Activated CD4-positive, alpha-beta T cell treated with anti-CD3 and anti-CD28 coated beads for 36 hours (primary cell): ENCODE measurements at regions of chr6 and their contacts with region 1.

Region 1: GRCh38 chr6:26473758-26474438 is 16.1 kb downstream of the BTN2A1 start:
- DNase-seq: peak; percentile 86
- ATAC-seq: peak; percentile 94
- H3K4me3 Mint-ChIP-seq: peak overlapping the region; percentile 100
- H3K27ac Mint-ChIP-seq: peak overlapping the region; percentile 100
- H3K4me1 Mint-ChIP-seq: peaks cover 38% of the 10 kb centered on the region
- H3K27me3 Mint-ChIP-seq: no peaks in the 10 kb centered on the region

Region 2: DNA sequence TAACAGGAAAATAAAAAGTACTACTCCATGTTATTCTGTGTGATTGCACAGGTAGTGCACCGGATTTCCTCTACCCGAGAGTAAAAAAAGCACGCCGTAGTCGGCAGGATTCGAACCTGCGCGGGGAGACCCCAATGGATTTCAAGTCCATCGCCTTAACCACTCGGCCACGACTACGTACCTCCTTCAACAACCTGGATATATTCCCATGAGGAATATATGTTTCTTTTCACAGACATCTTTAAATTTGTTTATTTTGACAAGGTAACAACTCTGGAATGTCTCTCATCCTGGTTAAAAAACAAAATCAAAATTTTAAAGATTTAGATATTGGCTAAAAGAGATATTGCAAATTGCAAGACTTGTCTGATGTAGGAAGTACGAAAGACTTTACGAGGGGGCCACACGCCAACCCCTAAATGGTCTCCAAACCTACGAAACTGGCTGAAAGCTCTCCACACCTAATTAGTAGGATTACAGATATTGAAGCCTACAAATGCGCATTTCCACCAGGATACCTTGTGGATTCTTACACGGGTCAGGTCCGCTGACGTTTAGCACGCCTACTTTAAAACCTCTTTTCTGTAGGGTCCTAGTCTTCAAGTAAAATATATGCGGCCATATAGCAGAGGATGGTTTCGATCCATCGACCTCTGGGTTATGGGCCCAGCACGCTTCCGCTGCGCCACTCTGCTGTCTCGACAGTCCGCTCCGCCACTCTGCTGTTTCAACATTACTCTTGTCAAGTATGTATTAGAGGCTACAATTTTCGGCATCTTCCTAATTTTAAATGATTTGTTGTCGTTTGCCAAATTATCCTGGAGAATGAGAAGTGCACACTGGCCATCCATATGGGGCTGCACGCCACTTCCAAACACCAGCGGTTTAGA is 161.2 kb before region 1 on chr6:
- CTCF ChIA-PET with region 1: no interaction called
- POLR2A ChIA-PET with region 1: no interaction called
- intact Hi-C with region 1: no loop called
- DNase-seq: peak; percentile 89
- ATAC-seq: peak; percentile 69
- H3K4me3 Mint-ChIP-seq: peak overlapping the region; percentile 88
- H3K27ac Mint-ChIP-seq: peak overlapping the region; percentile 90
- H3K4me1 Mint-ChIP-seq: peaks cover 37% of the 10 kb centered on the region
- H3K27me3 Mint-ChIP-seq: peaks cover 3% of the 10 kb centered on the region

Region 3: DNA sequence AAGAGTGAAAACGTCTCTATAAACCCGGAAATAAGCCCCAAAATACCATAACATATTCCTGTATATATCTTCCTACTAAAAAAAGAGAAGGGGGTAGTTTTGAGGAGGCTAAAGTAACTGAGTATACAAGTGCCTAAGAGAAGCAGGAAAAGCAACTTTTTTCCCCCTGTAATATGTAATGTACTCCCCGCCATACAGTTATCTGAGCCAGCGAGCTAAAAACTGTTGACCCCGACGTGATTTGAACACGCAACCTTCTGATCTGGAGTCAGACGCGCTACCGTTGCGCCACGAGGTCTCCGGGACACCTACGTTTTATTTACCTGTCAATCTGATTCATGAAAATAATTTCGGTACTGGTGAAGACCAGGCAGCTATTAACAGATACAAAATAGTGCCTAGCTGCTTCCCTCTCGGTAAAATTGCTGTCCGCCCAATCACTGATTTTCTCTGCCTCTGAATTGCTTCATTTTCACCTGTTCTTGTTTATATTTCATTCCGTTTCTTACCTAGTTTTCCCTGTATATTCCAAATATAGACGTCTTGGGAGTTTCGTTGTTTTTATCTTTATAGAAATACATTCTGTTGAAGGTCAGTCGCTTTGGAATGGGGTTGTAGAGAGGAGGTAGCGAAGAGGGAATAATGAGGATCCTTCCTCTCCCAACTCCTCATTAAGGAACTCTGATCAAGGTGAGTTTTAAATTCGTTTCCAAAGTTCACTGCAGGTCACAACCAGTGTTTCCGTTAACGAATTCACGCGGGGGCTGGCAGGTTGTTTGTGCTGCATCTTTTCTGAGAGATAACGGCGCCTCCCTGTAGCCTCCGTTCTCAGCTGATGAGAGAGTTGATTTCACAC is 142.5 kb before region 1 on chr6:
- CTCF ChIA-PET with region 1: no interaction called
- POLR2A ChIA-PET with region 1: no interaction called
- intact Hi-C with region 1: no loop called
- DNase-seq: peak; percentile 78
- ATAC-seq: peak; percentile 53
- H3K4me3 Mint-ChIP-seq: peak overlapping the region; percentile 88
- H3K27ac Mint-ChIP-seq: peak overlapping the region; percentile 70
- H3K4me1 Mint-ChIP-seq: peaks cover 47% of the 10 kb centered on the region
- H3K27me3 Mint-ChIP-seq: peaks cover 10% of the 10 kb centered on the region

Region 4: GRCh38 chr6:26342106-26343004 is 131.5 kb before region 1 on chr6:
- CTCF ChIA-PET with region 1: interaction called, 3 read pairs
- POLR2A ChIA-PET with region 1: interaction called, 3 read pairs
- intact Hi-C with region 1: loop called in 1 of 2 experiments (anchors 5 kb)
- DNase-seq: peak; percentile 63
- ATAC-seq: peak; percentile 60
- H3K4me3 Mint-ChIP-seq: peak overlapping the region; percentile 73
- H3K27ac Mint-ChIP-seq: peak overlapping the region; percentile 81
- H3K4me1 Mint-ChIP-seq: peaks cover 12% of the 10 kb centered on the region
- H3K27me3 Mint-ChIP-seq: no peaks in the 10 kb centered on the region

Region 5: DNA sequence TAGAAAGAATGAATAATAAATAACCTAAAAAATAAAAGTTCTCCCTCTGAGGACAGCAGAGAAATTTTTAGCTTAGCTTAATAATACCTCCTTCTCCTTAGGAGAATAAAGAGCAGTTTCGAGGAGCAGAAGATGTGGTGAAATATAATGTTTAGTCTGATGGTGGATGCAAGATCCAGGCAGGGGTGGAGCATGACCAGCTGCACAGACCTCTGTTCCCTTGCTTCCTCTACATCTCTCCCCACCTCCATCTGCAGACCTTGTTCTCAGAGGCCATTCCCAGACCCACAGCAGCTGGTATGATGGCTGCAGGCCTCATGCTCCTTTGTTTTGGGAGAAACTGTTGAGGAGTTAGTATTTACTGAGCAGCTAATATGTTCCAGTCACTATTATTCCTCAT is 107.4 kb before region 1 on chr6:
- CTCF ChIA-PET with region 1: interaction called, 3 read pairs
- POLR2A ChIA-PET with region 1: interaction called, 5 read pairs
- intact Hi-C with region 1: loop called (anchors 1 to 5 kb)
- DNase-seq: no peak
- ATAC-seq: no peak
- H3K4me3 Mint-ChIP-seq: no peak overlapping the region
- H3K27ac Mint-ChIP-seq: peak overlapping the region; percentile 61
- H3K4me1 Mint-ChIP-seq: peaks cover 58% of the 10 kb centered on the region
- H3K27me3 Mint-ChIP-seq: no peaks in the 10 kb centered on the region

Region 6: DNA sequence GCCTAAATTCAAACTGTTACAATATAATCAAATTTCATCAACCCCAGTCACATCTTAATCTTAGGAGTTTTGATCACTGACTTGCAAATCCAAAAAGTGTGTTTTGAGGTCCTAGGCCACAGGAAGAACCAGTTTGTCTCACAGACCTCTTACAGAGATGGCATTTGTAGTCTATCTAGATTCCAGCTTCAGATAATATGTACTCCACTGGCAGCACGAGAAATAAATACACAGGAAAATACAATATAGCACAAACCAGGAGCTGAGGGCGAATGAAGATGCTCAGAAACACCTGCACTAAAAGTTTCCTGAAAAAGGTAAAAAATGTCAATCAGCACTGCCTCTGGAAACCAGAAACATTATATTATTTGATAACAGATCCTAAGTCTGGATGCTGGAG is 34.2 kb before region 1 on chr6:
- CTCF ChIA-PET with region 1: interaction called, 3 read pairs
- POLR2A ChIA-PET with region 1: no interaction called
- intact Hi-C with region 1: loop called in 1 of 2 experiments (anchors 1 kb)
- DNase-seq: no peak
- ATAC-seq: no peak
- H3K4me3 Mint-ChIP-seq: peak overlapping the region; percentile 96
- H3K27ac Mint-ChIP-seq: peak overlapping the region; percentile 98
- H3K4me1 Mint-ChIP-seq: peaks cover 40% of the 10 kb centered on the region
- H3K27me3 Mint-ChIP-seq: no peaks in the 10 kb centered on the region

Region 7: DNA sequence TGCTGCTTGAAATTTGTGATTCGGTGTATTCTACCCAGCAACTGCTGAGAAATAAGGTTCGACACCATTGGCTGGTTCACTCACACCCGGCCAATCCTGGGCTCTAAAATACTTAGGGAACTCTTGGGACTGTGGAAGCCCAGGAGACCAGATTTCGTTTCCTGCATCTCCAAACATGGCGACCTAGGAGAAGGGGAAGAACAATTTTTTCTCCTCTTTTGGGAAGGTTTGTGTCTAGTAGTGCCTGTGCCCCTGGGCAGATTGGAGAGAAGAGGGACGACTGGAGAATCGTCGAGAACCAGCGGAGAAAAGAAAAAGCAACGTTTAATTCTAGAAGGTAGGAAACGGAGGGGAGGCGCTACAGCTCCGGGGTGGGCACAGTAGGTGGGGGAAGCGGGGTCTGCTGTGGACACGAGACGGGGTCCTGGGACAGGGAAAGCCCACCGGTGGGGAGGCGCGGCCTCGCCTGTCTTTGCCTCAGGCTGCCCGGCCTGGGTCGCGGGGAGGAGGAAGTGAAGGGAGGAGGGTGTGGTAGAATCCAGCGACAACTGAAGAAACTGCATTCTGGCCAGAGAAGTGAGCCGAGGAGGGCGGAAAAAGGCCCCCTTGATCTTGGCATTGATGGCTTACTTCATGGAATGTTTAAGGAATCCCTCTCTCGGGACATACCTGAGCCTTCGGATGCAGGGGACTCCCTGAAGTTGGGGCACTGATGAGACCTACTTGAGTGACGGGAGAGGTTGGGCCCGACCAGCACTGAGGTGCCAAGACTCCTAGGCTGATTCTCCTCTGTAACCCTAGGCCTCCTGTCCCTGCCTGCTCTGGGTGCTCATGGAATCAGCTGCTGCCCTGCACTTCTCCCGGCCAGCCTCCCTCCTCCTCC is 15.9 kb before region 1 on chr6 and contains the start of gene BTN2A1:
- CTCF ChIA-PET with region 1: no interaction called
- POLR2A ChIA-PET with region 1: interaction called, 3 read pairs
- intact Hi-C with region 1: loop called (anchors 1 kb)
- DNase-seq: peak; percentile 76
- ATAC-seq: peak; percentile 99
- H3K4me3 Mint-ChIP-seq: peak within 1 kb of the TSS; percentile 87
- H3K27ac Mint-ChIP-seq: peak within 1 kb of the TSS; percentile 97
- H3K4me1 Mint-ChIP-seq: peaks cover 45% of the 10 kb centered on the region
- H3K27me3 Mint-ChIP-seq: no peaks in the 10 kb centered on the region
- total RNA-seq, gene BTN2A1: 17.3 to 17.5 TPM

Region 8: GRCh38 chr6:26520853-26521599 is 47.1 kb after region 1 on chr6:
- CTCF ChIA-PET with region 1: no interaction called
- POLR2A ChIA-PET with region 1: no interaction called
- intact Hi-C with region 1: loop called (anchors 1 to 2 kb)
- DNase-seq: peak; percentile 89
- ATAC-seq: peak; percentile 73
- H3K4me3 Mint-ChIP-seq: peak overlapping the region; percentile 85
- H3K27ac Mint-ChIP-seq: peak overlapping the region; percentile 94
- H3K4me1 Mint-ChIP-seq: peaks cover 24% of the 10 kb centered on the region
- H3K27me3 Mint-ChIP-seq: no peaks in the 10 kb centered on the region

Region 9: DNA sequence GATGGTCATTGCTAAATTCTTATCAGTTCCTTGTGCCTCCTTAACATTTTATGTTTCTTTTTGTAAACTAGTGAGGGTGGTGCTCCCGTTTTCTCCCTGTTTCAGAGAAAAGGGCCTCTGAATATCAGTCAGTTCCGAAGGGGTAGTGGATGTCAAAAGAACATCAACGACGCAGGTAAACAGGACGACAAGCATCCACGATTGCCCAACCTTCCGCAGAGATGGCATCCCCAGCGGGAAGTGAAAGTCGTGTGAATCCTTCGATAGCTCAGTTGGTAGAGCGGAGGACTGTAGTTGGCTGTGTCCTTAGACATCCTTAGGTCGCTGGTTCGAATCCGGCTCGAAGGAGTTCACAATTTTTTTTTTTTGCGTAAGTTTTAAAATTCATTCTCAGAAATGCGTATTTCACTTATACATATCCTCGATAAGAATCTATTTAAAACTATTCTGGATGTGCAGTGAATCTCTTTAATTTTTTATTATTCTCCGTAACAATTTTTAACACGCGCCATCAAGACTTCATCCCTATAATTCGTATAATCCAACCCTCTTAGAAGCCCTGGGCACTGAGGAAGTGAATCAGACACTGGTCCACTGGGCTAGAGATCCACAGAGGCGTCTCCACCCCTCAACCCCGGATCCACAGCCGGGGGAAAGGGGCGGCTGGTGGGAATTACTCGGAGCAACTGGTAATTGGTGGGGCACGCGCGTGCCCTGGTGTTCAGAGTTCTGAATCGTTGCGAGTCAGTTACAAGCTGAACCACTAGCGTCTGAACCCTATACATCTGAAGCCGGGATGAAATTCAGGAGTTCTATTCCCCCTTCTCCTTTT is 94.9 kb after region 1 on chr6:
- CTCF ChIA-PET with region 1: interaction called, 4 read pairs
- POLR2A ChIA-PET with region 1: no interaction called
- intact Hi-C with region 1: loop called in 1 of 2 experiments (anchors 1 kb)
- DNase-seq: peak; percentile 97
- ATAC-seq: peak; percentile 74
- H3K4me3 Mint-ChIP-seq: peak overlapping the region; percentile 85
- H3K27ac Mint-ChIP-seq: peak overlapping the region; percentile 81
- H3K4me1 Mint-ChIP-seq: peaks cover 29% of the 10 kb centered on the region
- H3K27me3 Mint-ChIP-seq: peaks cover 2% of the 10 kb centered on the region